Prostate gland (tissue), 2 donors: ENCODE measurements at regions of chr5 and their contacts with region 1.

Region 1: DNA sequence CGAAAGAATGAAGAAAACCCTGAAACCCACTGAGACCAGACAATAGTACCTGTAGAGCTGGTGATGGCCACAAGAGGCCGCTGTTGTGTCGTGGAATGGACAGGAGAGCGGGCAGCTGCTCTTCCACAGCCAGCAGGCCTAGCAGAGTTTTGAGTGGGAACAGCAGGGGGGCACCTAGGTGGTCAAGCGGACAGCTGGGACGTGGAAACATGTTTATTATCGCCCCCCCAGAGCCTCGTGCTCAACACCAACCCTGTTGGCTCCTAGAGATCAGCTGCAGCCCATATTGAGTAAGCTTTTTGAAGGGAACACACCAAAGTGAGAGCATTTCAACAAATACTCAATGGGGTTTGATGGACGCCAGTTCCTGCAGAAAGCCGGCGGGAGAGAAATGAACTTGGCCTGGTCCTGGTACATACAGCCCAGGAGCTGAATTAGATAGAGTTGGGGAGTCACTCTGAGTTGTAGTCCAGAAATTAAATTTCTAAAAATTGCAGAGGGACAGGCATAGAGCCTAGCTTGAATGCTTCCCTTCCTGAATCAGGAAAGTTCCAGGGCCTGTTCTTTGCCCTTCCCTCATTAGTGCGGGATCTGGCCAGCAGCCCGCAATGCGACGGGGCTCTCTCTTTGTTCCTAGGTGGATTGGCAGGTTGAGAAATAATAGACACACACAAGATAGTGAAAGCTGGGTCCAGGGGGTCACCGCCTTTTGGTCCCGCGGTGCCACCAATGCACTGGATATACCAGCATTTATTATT is 33.8 kb downstream of the MFAP3 start:
- DNase-seq: peak; percentile 64
- H3K4me3 ChIP-seq: no peak overlapping the region
- H3K27ac ChIP-seq: no peak overlapping the region
- H3K4me1 ChIP-seq: no peaks in the 10 kb centered on the region
- H3K27me3 ChIP-seq: no peaks in the 10 kb centered on the region
- CTCF ChIP-seq: peak; percentile 86 to 93 (median 92)
- POLR2A ChIP-seq: no peak

Region 2: GRCh38 chr5:154002093-154002492 is 70.5 kb before region 1 on chr5:
- intact Hi-C with region 1: no loop called
- DNase-seq: no peak
- H3K4me3 ChIP-seq: no peak overlapping the region
- H3K27ac ChIP-seq: peak overlapping the region in 1 of 2 donors; percentile 5
- H3K4me1 ChIP-seq: no peaks in the 10 kb centered on the region
- H3K27me3 ChIP-seq: no peaks in the 10 kb centered on the region
- CTCF ChIP-seq: no peak
- POLR2A ChIP-seq: no peak

Region 3: GRCh38 chr5:154015071-154015693 is 57.4 kb before region 1 on chr5:
- intact Hi-C with region 1: no loop called
- DNase-seq: no peak
- H3K4me3 ChIP-seq: no peak overlapping the region
- H3K27ac ChIP-seq: no peak overlapping the region
- H3K4me1 ChIP-seq: no peaks in the 10 kb centered on the region
- H3K27me3 ChIP-seq: no peaks in the 10 kb centered on the region
- CTCF ChIP-seq: no peak
- POLR2A ChIP-seq: no peak

Region 4: DNA sequence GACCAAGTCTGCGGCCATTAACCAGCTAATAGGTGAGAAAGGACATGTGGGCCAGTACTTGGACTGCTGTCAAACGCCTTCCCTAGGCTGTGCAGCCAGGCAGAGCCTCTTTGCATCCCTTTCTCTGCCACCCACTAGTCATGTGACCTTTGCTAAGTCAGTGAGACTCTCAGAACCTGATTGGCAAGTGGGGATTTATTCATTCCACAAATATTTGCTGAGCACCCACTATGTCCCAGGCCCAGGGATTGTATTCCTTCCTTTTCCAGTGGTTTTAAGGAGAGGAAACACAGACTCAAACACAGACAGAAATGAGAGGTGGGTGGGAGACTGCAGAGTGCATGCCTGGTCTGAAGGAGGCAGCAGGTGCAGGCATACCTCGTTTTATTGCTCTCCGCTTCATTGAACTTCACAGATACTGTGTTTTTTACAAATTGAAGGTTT is 46.3 kb after region 1 on chr5:
- intact Hi-C with region 1: no loop called
- DNase-seq: no peak
- H3K4me3 ChIP-seq: no peak overlapping the region
- H3K27ac ChIP-seq: no peak overlapping the region
- H3K4me1 ChIP-seq: no peaks in the 10 kb centered on the region
- H3K27me3 ChIP-seq: no peaks in the 10 kb centered on the region
- CTCF ChIP-seq: no peak
- POLR2A ChIP-seq: no peak

Region 5: DNA sequence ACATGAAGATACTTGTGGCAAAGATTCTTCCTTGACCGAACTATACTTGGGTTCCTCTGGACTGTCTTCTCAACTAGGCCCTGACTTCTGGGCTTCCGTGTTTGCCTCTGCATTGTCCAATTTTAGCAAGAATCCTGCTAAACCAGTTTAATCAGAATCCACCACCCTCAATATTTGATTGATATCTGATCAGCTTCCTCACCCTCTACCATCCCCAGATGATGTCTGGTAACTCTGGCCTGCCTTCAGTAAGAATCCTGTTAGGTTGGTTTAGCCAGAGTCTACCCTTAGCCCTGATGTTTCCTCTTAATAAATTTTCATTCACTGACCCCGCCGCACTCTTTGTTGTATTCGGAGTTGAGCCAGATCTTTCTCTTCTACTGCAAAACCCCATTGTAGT is 63.6 kb after region 1 on chr5:
- intact Hi-C with region 1: loop called (anchors 2 kb)
- DNase-seq: no peak
- H3K4me3 ChIP-seq: no peak overlapping the region
- H3K27ac ChIP-seq: no peak overlapping the region
- H3K4me1 ChIP-seq: no peaks in the 10 kb centered on the region
- H3K27me3 ChIP-seq: no peaks in the 10 kb centered on the region
- CTCF ChIP-seq: no peak
- POLR2A ChIP-seq: no peak

Region 6: DNA sequence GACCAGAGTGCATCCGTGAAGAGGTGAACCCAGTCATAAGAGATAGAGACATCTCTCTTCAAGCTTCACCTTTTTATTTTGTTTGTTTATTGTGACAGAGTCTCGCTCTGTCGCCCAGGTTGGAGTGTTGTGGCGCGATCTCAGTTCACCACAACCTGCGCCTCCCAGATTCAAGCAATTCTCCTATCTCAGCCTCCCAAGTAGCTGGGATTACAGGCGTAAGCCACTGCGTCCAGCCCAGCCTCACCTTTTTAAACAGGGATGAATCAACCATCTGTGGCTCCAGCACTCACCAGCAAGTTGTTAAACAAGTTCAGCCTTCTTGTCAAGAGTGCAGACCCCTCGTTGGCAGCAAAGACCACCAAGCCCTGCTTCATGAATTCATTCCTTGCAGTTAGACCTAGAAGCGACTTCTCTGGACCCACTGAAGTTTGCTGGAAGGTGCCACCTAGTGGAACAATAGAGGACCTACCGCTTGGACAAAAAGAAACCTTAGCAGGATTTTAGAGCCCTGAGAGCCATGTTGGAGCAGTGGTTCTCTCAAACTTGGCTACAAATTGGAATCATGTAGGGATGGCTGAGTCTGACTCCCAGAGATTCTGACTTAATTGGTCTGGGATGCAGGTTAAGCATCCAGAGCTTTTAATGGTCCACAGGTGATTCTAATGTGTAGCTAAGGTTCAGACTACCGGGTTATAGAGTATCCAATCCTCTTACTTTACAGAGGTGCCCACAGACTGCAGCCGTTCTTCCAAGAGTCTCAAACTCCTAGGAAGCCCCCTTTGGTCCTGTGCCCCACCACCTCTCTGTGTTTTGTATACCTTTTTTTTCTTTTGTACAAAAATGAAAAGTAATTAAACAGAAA is 107.5 kb after region 1 on chr5:
- intact Hi-C with region 1: loop called (anchors 1 kb)
- DNase-seq: peak; percentile 48
- H3K4me3 ChIP-seq: no peak overlapping the region
- H3K27ac ChIP-seq: no peak overlapping the region
- H3K4me1 ChIP-seq: no peaks in the 10 kb centered on the region
- H3K27me3 ChIP-seq: no peaks in the 10 kb centered on the region
- CTCF ChIP-seq: peak; percentile 54 to 71 (median 62)
- POLR2A ChIP-seq: no peak

Region 7: GRCh38 chr5:154405078-154405792 is 332.6 kb after region 1 on chr5:
- intact Hi-C with region 1: loop called (anchors 1 kb)
- DNase-seq: peak; percentile 64
- H3K4me3 ChIP-seq: peak overlapping the region; percentile 5 to 20
- H3K27ac ChIP-seq: no peak overlapping the region
- H3K4me1 ChIP-seq: no peaks in the 10 kb centered on the region
- H3K27me3 ChIP-seq: no peaks in the 10 kb centered on the region
- CTCF ChIP-seq: peak; percentile 44 to 93 (median 76)
- POLR2A ChIP-seq: no peak